ENCODE measurements at regions of chr12 and their contacts with region 1.

Region 1: GRCh38 chr12:69070319-69071090 is 137.5 kb upstream of the CPM start:
- DNase-seq: peak; percentile 80
- H3K4me3 ChIP-seq: no peak overlapping the region
- H3K27ac ChIP-seq: no peak overlapping the region
- H3K4me1 ChIP-seq: peaks cover 26% of the 10 kb centered on the region
- H3K27me3 ChIP-seq: peaks cover 23 to 50% of the 10 kb centered on the region in 2 experiments
- CTCF ChIP-seq: peak; percentile 81 to 82
- POLR2A ChIP-seq: no peak

Region 2: GRCh38 chr12:68521321-68521839 is 549.1 kb before region 1 on chr12:
- CTCF ChIA-PET with region 1: no interaction called
- POLR2A ChIA-PET with region 1: no interaction called
- dilution Hi-C with region 1: no loop called
- intact Hi-C with region 1: no loop called
- DNase-seq: peak; percentile 92
- H3K4me3 ChIP-seq: peak overlapping the region in 2 of 3 experiments; percentile 9 to 51
- H3K27ac ChIP-seq: peak overlapping the region; percentile 95
- H3K4me1 ChIP-seq: peaks cover 17% of the 10 kb centered on the region
- H3K27me3 ChIP-seq: no peaks in the 10 kb centered on the region
- CTCF ChIP-seq: no peak
- POLR2A ChIP-seq: no peak

Region 3: DNA sequence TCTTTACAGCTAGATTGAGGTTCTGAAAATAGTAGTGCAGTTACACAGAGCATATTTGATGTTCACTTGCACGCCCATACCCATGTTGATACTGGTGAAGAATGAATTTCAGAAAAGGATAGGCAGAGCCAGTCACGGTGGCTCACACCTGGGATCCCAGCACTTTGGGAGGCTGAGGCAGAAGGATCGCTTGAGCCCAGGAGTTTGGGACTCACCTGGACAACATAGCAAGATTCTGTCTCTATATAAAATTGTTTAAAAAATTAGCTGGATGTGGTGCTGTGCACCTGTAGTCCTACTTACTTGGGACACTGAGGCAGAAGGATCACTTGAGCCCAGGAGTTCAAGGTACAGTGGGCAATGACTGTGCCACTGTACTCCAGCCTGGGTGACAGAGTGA is 205.9 kb before region 1 on chr12:
- CTCF ChIA-PET with region 1: interaction called, 6 read pairs
- POLR2A ChIA-PET with region 1: no interaction called
- dilution Hi-C with region 1: no loop called
- intact Hi-C with region 1: loop called (anchors 1 kb)
- DNase-seq: no peak
- H3K4me3 ChIP-seq: no peak overlapping the region
- H3K27ac ChIP-seq: no peak overlapping the region
- H3K4me1 ChIP-seq: no peaks in the 10 kb centered on the region
- H3K27me3 ChIP-seq: peaks cover 16 to 21% of the 10 kb centered on the region in 2 experiments
- CTCF ChIP-seq: no peak
- POLR2A ChIP-seq: no peak

Region 4: DNA sequence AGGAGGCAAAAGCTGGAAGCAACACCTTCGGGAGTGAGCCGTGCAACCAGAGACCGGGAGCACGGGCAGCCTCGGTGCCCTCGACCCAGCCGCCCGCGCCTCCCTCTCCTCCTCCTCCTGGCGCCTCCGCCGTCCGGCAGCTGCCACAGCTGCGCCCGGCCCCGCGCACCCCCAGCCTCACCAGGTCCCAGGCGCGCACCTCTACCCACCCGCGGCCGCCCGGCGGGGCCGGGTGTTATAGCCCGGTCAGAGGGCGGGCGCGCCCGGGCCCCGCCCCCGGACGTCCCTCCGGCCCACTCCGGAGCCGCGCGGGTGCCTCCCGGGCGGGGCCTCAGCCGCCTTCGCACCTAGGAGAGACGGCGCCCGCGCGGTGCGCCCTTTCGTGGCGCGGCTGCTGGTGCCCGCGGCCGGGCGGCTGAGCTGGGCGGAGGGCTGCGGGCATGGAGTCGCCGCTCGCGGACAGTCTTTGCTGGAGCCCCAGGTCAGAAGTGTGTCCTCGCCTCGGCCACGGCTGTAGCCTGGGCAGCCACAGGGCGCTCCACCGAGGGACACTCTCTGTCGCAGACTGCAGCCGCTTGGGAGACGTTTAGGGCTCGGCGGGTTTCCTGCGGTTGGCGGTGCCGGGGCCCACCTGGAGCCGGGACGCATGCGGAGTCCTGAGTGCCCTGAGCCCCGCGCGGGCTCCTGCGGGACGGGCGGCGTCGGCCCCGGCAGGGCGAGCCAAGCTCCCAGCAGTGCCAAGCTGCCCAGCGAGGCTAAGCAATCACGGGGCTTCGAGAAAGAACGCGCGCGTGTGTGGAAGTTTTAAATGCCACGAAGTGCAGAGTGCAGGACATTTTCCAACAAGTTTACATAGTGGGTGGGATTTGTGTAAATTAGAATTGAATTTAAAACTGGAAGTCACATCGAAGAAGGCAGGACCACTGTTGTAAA is 137.3 kb before region 1 on chr12 and contains the start of gene CPM:
- CTCF ChIA-PET with region 1: interaction called, 3 read pairs
- POLR2A ChIA-PET with region 1: no interaction called
- dilution Hi-C with region 1: no loop called
- intact Hi-C with region 1: loop called (anchors 2 kb)
- DNase-seq: no peak
- H3K4me3 ChIP-seq: peak within 1 kb of the TSS in 1 of 3 experiments; percentile 17
- H3K27ac ChIP-seq: no peak within 1 kb of the TSS
- H3K4me1 ChIP-seq: no peaks in the 10 kb centered on the region
- H3K27me3 ChIP-seq: peaks cover 23 to 31% of the 10 kb centered on the region in 2 experiments
- CTCF ChIP-seq: no peak
- POLR2A ChIP-seq: no peak
- total RNA-seq, gene CPM: not detected in 2 replicates

Region 5: DNA sequence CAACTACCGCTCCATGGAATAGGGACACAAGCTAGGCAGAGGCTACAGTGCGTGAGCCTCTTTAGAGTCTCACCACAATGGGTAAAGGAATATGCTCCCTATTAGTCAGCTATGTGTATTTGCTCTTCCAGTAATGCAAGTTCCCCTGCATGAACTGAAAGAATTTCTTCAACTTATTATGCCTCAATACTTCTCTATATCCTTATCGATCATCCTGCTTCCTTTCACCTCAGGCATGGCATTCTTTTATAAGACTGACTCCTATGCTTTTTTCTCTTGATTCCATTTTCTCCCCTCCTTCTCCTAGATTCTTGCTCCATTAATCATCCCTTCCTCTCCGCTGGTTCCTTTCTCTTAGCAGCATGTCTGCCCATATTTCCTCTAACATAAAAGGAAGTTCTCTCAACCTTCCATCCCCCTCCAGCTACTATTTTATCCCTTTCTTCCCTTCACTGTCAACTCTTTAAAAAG is 43.1 kb before region 1 on chr12:
- CTCF ChIA-PET with region 1: interaction called, 6 read pairs
- POLR2A ChIA-PET with region 1: no interaction called
- dilution Hi-C with region 1: no loop called
- intact Hi-C with region 1: loop called (anchors 1 kb)
- DNase-seq: peak; percentile 52
- H3K4me3 ChIP-seq: no peak overlapping the region
- H3K27ac ChIP-seq: peak overlapping the region; percentile 21
- H3K4me1 ChIP-seq: peaks cover 10% of the 10 kb centered on the region
- H3K27me3 ChIP-seq: no peaks in the 10 kb centered on the region
- CTCF ChIP-seq: no peak
- POLR2A ChIP-seq: no peak

Region 6: DNA sequence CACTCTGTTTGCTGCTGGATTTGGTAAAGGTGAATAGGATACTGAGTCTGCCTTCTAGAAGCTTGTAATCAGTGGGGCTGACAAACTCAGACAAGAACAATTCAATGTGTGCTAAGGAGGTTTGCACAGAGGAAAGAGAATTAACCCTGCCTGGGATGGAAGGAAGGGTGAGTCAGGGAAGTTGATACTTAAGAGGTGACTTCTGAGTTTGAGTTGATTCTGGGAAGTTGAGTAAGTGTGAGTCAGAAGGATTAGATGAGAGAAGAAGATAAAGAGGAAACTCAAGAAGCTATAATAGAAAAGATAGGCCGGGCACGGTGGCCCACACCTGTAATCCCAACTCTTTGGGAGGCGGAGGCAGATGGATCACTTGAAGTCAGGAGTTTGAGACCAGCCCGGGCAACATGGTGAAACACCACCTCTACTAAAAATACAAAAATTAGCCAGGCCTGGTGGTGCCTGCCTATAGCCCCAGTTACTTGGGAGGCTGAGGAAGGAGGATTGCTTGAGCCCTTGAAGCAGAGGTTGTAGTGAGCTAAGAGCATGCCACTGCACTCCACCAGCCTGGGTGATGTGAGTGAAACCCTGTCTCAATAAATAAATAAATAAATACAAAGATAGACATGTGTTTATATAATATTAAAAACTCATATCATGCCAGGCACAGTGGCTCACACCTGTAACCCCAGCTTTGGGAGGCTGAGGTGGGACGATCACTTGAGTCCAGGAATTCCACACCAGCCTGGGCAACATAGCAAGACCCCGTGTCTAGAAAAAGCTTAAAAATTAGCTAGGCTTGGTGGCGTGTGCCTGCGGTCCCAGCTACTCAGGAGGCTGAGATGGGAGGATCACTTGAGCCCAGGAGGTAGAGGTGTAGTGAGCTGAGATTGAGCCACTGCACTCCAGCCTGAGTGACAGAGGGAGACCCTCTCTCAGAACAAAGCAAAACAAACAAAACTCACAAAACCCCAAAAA is 10.7 kb before region 1 on chr12:
- CTCF ChIA-PET with region 1: interaction called, 10 read pairs
- POLR2A ChIA-PET with region 1: no interaction called
- dilution Hi-C with region 1: no loop called
- intact Hi-C with region 1: no loop called
- DNase-seq: peak; percentile 75
- H3K4me3 ChIP-seq: no peak overlapping the region
- H3K27ac ChIP-seq: no peak overlapping the region
- H3K4me1 ChIP-seq: peaks cover 4% of the 10 kb centered on the region
- H3K27me3 ChIP-seq: peaks cover 4 to 6% of the 10 kb centered on the region in 2 experiments
- CTCF ChIP-seq: no peak
- POLR2A ChIP-seq: no peak

Region 7: GRCh38 chr12:69097619-69098368 is 27.3 kb after region 1 on chr12:
- CTCF ChIA-PET with region 1: interaction called, 7 read pairs
- POLR2A ChIA-PET with region 1: no interaction called
- dilution Hi-C with region 1: no loop called
- intact Hi-C with region 1: loop called (anchors 1 kb)
- DNase-seq: peak; percentile 52
- H3K4me3 ChIP-seq: no peak overlapping the region
- H3K27ac ChIP-seq: peak overlapping the region; percentile 48
- H3K4me1 ChIP-seq: peaks cover 27% of the 10 kb centered on the region
- H3K27me3 ChIP-seq: peaks cover 8 to 17% of the 10 kb centered on the region in 2 experiments
- CTCF ChIP-seq: no peak
- POLR2A ChIP-seq: no peak

Region 8: DNA sequence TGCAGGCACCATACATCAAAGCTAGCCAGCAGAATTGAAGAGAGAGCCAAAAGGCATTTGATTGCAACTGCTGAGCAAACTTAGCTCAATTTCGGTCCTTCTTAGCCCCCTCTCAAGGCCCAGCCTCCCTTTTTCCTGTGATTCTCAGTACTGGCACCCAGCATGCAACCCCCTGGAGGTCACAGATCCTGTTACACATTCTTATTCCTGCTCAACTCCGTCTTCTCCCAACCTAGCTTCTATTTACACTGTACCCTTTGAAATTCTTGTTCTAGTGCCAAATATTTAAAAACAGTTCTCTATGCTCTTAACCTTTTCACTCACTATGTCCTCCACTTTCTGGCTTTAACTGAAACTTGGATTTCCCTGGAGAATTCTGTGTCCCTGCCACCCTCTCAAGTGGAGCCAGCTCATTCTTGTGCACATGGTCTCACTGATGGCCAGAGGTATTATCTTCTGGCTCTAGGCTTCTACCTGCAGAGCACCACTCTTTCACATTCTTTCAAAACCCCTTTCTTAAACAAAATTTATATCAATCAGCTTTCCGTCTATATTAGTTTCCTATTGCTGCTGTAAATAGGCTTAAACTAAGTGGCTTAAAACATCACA is 37.6 kb after region 1 on chr12:
- CTCF ChIA-PET with region 1: no interaction called
- POLR2A ChIA-PET with region 1: no interaction called
- dilution Hi-C with region 1: no loop called
- intact Hi-C with region 1: no loop called
- DNase-seq: no peak
- H3K4me3 ChIP-seq: no peak overlapping the region
- H3K27ac ChIP-seq: no peak overlapping the region
- H3K4me1 ChIP-seq: no peaks in the 10 kb centered on the region
- H3K27me3 ChIP-seq: peaks cover 7 to 11% of the 10 kb centered on the region in 2 experiments
- CTCF ChIP-seq: no peak
- POLR2A ChIP-seq: no peak

Measured in endothelial cell of umbilical vein (primary cell).